ENCODE measurements at regions of chr19 and their contacts with region 1.

Region 1: DNA sequence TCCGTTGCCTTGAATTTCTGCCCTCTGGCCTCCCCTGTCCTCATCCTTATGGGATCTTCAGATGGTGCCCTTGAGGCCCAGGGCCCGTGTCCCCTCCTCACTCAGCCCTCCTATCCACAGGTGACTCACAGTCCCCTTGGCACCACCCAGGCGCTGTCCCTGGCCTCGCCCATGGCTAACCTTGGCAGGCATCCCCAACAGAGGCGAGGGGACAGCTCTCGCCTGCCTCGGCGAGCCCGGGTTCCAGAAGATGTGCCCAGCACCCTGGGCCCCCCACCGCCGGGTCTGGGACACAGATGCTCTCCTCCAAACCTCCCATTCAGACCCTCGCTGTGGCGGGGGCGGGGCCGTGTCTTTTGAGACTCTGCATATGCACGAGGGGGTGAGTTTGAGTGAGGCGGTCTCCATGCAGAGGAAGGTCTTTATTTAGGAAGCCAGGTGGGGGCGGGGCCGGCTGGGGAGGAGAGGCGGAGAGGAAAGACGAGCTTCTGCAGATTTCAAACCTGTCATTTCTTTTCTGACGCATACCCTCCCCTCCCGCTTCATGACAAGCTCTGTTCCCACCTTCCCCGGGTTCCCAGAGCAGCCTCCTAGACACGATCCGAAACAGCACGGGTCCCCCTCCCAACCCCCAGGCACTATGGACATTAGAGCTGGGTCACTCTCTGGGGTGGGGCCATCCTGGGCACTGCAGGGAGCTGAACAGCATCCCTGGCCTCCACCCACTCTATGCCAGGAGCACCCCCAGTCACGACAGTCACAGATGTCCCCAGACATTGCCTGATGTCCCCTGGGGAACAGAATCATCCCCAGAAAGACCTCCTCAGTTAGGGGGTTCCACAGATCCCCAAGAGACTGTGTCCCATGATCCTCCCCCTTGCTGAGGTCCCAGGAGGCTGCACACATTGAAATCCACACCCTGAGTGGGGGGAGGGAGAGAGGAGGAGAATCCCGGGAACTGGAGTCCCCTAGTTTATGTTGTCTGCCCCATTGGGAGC is 48.5 kb downstream of the GNG7 start:
- DNase-seq: no peak
- H3K4me3 ChIP-seq: no peak overlapping the region
- H3K27ac ChIP-seq: no peak overlapping the region
- H3K4me1 ChIP-seq: no peaks in the 10 kb centered on the region
- H3K27me3 ChIP-seq: no peaks in the 10 kb centered on the region
- CTCF ChIP-seq: no peak
- EP300 ChIP-seq: no peak
- POLR2A ChIP-seq: no peak

Region 2: GRCh38 chr19:2867025-2867991 is 213.3 kb after region 1 on chr19 and contains the start of gene ZNF556:
- in situ Hi-C with region 1: loop called in 2 of 4 experiments (anchors 5 to 10 kb)
- intact Hi-C with region 1: loop called (anchors 10 kb)
- DNase-seq: no peak
- H3K4me3 ChIP-seq: no peak within 1 kb of the TSS
- H3K27ac ChIP-seq: no peak within 1 kb of the TSS
- H3K4me1 ChIP-seq: no peaks in the 10 kb centered on the region
- H3K27me3 ChIP-seq: no peaks in the 10 kb centered on the region
- CTCF ChIP-seq: no peak
- EP300 ChIP-seq: no peak
- POLR2A ChIP-seq: no peak
- total RNA-seq, gene ZNF556: not detected